ENCODE measurements at regions of chr17 and their contacts with region 1.

Region 1: GRCh38 chr17:16438557-16439302 is 23.4 kb downstream of the TRPV2 start:
- DNase-seq: peak; percentile 100
- H3K4me3 Mint-ChIP-seq: peak overlapping the region; percentile 88
- H3K27ac Mint-ChIP-seq: peak overlapping the region; percentile 99
- H3K4me1 Mint-ChIP-seq: peaks cover 21% of the 10 kb centered on the region
- H3K27me3 Mint-ChIP-seq: no peaks in the 10 kb centered on the region
- CTCF ChIP-seq: no peak

Region 2: DNA sequence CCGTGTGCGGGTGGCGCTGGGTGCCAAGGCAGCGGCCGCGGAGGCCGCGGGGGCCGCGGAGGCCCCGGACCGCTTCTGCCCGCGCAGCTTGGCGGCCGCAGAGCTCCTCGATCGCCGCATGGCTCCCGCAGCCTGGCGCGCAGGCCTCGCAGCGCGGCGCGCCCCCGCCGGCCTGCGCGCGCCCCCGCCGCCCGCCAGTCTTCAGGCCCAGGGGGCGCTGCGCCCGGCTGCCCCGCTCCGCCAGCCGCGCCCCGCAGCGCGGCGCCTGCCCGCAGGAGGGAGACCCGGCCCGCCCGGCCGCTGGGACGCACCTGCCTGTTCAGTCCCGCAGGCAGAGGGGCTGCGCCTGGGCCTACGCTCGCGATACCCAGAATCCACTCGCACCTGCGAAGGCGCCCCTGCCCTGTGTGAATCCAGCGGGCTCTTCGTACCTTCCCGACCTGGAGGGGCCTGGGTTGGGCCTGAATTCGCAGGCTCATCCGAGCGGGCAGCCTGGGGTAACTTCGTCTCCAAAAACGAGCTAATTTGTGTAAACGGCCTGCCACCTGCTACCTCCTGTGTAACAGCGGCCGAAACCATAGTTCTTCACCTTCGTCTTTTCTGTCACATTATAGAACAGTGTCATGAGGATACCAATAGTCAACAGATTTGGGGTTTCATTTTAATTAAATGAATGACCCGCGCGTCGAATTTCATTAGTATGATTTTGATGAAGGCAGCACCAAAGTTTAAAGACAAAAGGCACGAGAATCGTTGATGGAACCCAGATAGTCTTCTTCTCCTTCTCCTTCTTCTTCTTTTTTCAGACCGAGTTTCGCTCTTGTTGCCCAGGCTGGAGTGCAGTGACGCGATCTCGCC is 85.2 kb before region 1 on chr17 and contains the start of gene CENPV:
- CTCF ChIA-PET with region 1: interaction called, 5 read pairs
- POLR2A ChIA-PET with region 1: interaction called, 39 read pairs
- intact Hi-C with region 1: no loop called
- DNase-seq: peak; percentile 11
- H3K4me3 Mint-ChIP-seq: peak within 1 kb of the TSS; percentile 81
- H3K27ac Mint-ChIP-seq: peak within 1 kb of the TSS; percentile 43
- H3K4me1 Mint-ChIP-seq: peaks cover 4% of the 10 kb centered on the region
- H3K27me3 Mint-ChIP-seq: no peaks in the 10 kb centered on the region
- CTCF ChIP-seq: peak; percentile 9
- total RNA-seq, gene CENPV: 22.4 and 27.7 TPM in 2 replicates

Region 3: DNA sequence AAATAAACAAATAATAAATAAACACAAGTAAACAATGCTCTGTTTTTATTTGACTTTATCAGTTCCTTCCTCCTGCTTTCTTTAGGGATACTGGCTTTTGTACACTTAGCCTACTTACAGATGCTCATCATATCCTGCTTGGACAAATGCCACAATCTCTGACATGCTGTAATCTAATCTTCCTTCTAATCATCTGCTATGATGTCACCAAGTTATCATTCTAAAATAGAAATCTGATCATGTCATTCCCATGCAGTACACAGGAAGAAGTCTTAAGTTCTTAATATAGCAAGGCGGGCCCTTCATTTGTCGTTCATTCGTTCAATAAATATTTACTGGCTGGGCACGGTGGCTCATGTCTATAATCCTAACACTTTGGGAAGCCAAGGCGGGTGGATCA is 67.0 kb before region 1 on chr17:
- CTCF ChIA-PET with region 1: interaction called, 44 read pairs
- POLR2A ChIA-PET with region 1: interaction called, 238 read pairs
- intact Hi-C with region 1: no loop called
- DNase-seq: no peak
- H3K4me3 Mint-ChIP-seq: no peak overlapping the region
- H3K27ac Mint-ChIP-seq: no peak overlapping the region
- H3K4me1 Mint-ChIP-seq: peaks cover 14% of the 10 kb centered on the region
- H3K27me3 Mint-ChIP-seq: no peaks in the 10 kb centered on the region
- CTCF ChIP-seq: no peak

Region 4: GRCh38 chr17:16419074-16419928 is 19.4 kb before region 1 on chr17:
- CTCF ChIA-PET with region 1: interaction called, 3 read pairs
- POLR2A ChIA-PET with region 1: interaction called, 11 read pairs
- intact Hi-C with region 1: no loop called
- DNase-seq: peak; percentile 89
- H3K4me3 Mint-ChIP-seq: no peak overlapping the region
- H3K27ac Mint-ChIP-seq: peak overlapping the region; percentile 82
- H3K4me1 Mint-ChIP-seq: peaks cover 9% of the 10 kb centered on the region
- H3K27me3 Mint-ChIP-seq: no peaks in the 10 kb centered on the region
- CTCF ChIP-seq: no peak

Region 5: DNA sequence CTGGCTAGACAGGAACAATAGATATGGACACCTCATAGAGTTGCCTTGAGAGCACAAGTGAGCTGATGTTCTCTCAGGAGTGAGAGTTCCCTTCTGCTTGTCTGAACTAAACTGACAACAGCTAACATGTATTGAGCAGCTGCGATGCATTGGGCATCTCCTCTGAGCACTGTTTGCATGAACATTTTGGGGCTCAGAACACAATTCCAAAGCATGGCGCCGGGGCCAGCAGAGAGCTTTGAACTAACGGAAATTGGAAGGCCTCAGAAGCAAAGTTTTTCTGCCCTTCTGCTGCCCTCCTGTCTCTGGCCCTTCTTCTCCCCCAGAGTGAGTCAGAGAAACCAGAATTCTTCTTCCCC is 14.7 kb after region 1 on chr17:
- CTCF ChIA-PET with region 1: interaction called, 59 read pairs
- POLR2A ChIA-PET with region 1: interaction called, 7 read pairs
- intact Hi-C with region 1: no loop called
- DNase-seq: no peak
- H3K4me3 Mint-ChIP-seq: no peak overlapping the region
- H3K27ac Mint-ChIP-seq: no peak overlapping the region
- H3K4me1 Mint-ChIP-seq: no peaks in the 10 kb centered on the region
- H3K27me3 Mint-ChIP-seq: no peaks in the 10 kb centered on the region
- CTCF ChIP-seq: no peak

Region 6: DNA sequence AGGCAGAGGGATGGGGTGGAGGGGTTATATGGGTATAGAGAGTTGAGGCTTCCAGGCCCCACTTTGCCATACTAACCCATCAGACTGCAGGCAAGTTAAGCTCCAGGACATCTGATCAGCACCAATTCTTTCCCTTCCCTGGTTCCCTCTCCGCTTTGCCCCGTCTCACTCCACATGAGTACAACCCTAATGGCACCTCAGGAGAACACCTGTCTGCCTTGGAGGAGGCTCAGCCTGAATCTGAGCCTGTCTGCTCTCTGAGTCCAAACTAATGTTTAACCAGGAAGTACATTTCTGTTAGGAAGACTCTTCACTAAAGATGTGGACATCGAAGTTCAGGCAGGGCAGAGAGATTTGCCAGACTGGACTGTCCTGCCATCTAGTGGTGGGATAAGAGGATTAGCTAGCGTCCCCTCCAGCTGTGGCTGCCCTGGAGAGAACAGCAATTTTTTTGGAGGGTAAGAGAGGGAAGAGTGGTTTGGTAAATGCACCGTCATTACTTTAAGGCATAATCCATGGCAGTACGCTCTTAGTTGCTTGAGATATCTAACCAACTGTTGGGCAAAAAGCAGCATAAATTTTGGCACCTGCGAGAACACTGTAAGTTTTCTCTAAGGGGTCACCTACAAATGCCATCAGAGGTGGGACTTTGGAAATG is 82.5 kb after region 1 on chr17:
- CTCF ChIA-PET with region 1: interaction called, 19 read pairs
- POLR2A ChIA-PET with region 1: interaction called, 15 read pairs
- intact Hi-C with region 1: no loop called
- DNase-seq: peak; percentile 89
- H3K4me3 Mint-ChIP-seq: no peak overlapping the region
- H3K27ac Mint-ChIP-seq: no peak overlapping the region
- H3K4me1 Mint-ChIP-seq: peaks cover 14% of the 10 kb centered on the region
- H3K27me3 Mint-ChIP-seq: peaks cover 20% of the 10 kb centered on the region
- CTCF ChIP-seq: peak; percentile 81